Activated CD4-positive, alpha-beta memory T cell treated with anti-CD3 and anti-CD28 coated beads for 36 hours (primary cell): ENCODE measurements at regions of chr1 and their contacts with region 1.

Region 1: DNA sequence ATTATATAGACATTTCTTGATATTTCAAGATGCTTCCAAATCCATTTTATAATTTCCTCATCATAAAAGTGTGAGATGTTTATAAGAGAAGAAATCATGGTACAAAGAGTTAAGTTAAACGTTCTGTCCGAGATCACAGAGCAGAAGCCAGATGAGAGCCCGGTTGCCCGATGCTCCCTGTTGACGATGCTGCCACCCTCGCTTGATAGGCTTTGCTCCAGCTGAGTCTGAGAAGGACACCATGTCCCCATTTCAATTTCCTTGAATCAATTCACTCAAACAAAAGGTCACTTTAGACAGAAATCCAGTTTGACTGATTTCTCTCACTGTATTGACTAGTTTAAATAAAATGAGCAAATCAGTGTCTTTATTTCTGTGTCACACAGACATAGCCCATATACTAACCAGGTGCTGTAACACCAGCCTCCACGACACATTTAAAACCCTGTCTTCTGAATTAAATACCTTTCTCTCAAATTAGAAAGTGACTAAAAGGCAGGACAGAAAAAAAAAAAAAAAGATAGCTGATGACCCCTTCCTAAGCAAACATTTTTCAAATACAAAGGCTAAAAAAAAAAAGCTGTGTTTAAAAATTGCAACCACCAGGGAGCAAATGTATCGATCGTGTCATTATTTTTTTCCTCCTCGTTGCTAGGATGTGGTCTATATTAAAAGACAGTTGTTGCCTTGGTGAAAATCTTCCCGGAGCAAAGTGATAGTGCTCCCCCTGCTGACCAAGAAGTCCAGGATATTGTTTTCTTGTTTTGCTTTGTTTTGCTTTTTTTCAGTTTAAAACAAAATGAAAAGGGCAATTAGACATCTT is 35.2 kb downstream of the DNASE2B start:
- DNase-seq: peak; percentile 63
- H3K4me3 Mint-ChIP-seq: peak overlapping the region; percentile 48
- H3K27ac Mint-ChIP-seq: peak overlapping the region; percentile 11
- H3K4me1 Mint-ChIP-seq: peaks cover 13% of the 10 kb centered on the region
- H3K27me3 Mint-ChIP-seq: no peaks in the 10 kb centered on the region

Region 2: GRCh38 chr1:83905315-83905907 is 528.1 kb before region 1 on chr1:
- CTCF ChIA-PET with region 1: no interaction called
- POLR2A ChIA-PET with region 1: no interaction called
- intact Hi-C with region 1: loop called (anchors 2 kb)
- DNase-seq: no peak
- H3K4me3 Mint-ChIP-seq: no peak overlapping the region
- H3K27ac Mint-ChIP-seq: no peak overlapping the region
- H3K4me1 Mint-ChIP-seq: no peaks in the 10 kb centered on the region
- H3K27me3 Mint-ChIP-seq: peaks cover 13% of the 10 kb centered on the region

Region 3: GRCh38 chr1:83931658-83932253 is 501.7 kb before region 1 on chr1:
- CTCF ChIA-PET with region 1: interaction called, 3 read pairs
- POLR2A ChIA-PET with region 1: no interaction called
- intact Hi-C with region 1: loop called (anchors 1 kb)
- DNase-seq: no peak
- H3K4me3 Mint-ChIP-seq: no peak overlapping the region
- H3K27ac Mint-ChIP-seq: no peak overlapping the region
- H3K4me1 Mint-ChIP-seq: no peaks in the 10 kb centered on the region
- H3K27me3 Mint-ChIP-seq: peaks cover 6% of the 10 kb centered on the region

Region 4: GRCh38 chr1:84166797-84167196 is 266.7 kb before region 1 on chr1:
- CTCF ChIA-PET with region 1: interaction called, 13 read pairs
- POLR2A ChIA-PET with region 1: no interaction called
- intact Hi-C with region 1: no loop called
- DNase-seq: no peak
- H3K4me3 Mint-ChIP-seq: no peak overlapping the region
- H3K27ac Mint-ChIP-seq: no peak overlapping the region
- H3K4me1 Mint-ChIP-seq: peaks cover 74% of the 10 kb centered on the region
- H3K27me3 Mint-ChIP-seq: no peaks in the 10 kb centered on the region

Region 5: GRCh38 chr1:84298328-84298683 is 135.2 kb before region 1 on chr1:
- CTCF ChIA-PET with region 1: interaction called, 6 read pairs
- POLR2A ChIA-PET with region 1: no interaction called
- intact Hi-C with region 1: loop called (anchors 5 kb)
- DNase-seq: peak; percentile 56
- H3K4me3 Mint-ChIP-seq: peak overlapping the region; percentile 82
- H3K27ac Mint-ChIP-seq: no peak overlapping the region
- H3K4me1 Mint-ChIP-seq: peaks cover 35% of the 10 kb centered on the region
- H3K27me3 Mint-ChIP-seq: peaks cover 24% of the 10 kb centered on the region

Region 6: DNA sequence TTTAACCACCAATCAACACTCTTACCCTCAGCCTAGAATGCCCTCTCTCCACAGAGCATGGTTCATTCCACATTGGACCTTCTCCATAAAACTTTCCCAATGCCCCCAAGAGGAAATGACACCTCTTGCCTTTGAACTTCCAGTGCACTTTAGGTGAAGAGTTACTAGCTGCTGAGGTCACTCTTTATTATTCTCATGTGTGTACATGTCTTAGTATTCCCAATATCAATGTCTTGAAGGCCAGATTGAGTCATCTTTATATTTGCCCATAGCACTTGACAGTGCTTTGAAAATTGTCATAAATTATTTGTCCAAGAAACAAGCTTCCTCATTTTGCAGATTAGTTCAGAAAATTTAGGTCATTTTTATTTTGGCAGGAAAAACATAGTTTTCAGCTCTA is 43.2 kb before region 1 on chr1:
- CTCF ChIA-PET with region 1: no interaction called
- POLR2A ChIA-PET with region 1: no interaction called
- intact Hi-C with region 1: no loop called
- DNase-seq: no peak
- H3K4me3 Mint-ChIP-seq: no peak overlapping the region
- H3K27ac Mint-ChIP-seq: no peak overlapping the region
- H3K4me1 Mint-ChIP-seq: no peaks in the 10 kb centered on the region
- H3K27me3 Mint-ChIP-seq: no peaks in the 10 kb centered on the region

Region 7: GRCh38 chr1:84698151-84699110 is 265.0 kb after region 1 on chr1:
- CTCF ChIA-PET with region 1: no interaction called
- POLR2A ChIA-PET with region 1: no interaction called
- intact Hi-C with region 1: no loop called
- DNase-seq: no peak
- H3K4me3 Mint-ChIP-seq: no peak overlapping the region
- H3K27ac Mint-ChIP-seq: no peak overlapping the region
- H3K4me1 Mint-ChIP-seq: peaks cover 8% of the 10 kb centered on the region
- H3K27me3 Mint-ChIP-seq: peaks cover 6% of the 10 kb centered on the region